ENCODE measurements at regions of chr16 and their contacts with region 1.

Region 1: DNA sequence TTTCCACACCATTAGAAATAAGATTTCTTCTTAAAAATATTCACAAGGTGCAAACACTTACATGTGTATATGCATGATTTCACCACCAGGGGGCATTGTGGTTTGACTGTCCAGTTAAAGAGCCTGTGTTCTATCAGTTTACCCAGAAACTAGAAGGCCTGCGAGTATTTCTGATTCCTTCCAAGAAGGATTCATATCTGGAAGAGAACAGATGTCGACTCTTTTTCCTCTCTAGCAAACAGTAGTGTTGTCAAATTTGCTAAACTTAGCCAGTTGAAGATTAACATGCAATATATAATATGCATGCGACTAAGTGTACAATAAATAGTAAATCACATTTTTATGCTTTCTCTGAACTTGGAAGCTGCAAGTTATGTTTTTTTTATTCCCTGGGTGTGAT is 404.1 kb downstream of the WWOX start:
- DNase-seq: peak in 1 of 3 donors; percentile 63
- ATAC-seq: peak in 2 of 4 donors; percentile 20 to 31
- H3K4me3 ChIP-seq: no peak overlapping the region
- H3K27ac ChIP-seq: no peak overlapping the region
- H3K4me1 ChIP-seq: peaks cover 0 to 18% (median 2%) of the 10 kb centered on the region in 4 donors
- H3K27me3 ChIP-seq: no peaks in the 10 kb centered on the region
- CTCF ChIP-seq: peak; percentile 82 to 87 (median 84)
- POLR2A ChIP-seq: no peak

Region 2: GRCh38 chr16:78761427-78761826 is 257.8 kb after region 1 on chr16:
- intact Hi-C with region 1: loop called (anchors 10 kb)
- DNase-seq: no peak
- ATAC-seq: no peak
- H3K4me3 ChIP-seq: no peak overlapping the region
- H3K27ac ChIP-seq: no peak overlapping the region
- H3K4me1 ChIP-seq: peaks cover 0 to 7% (median 0%) of the 10 kb centered on the region in 4 donors
- H3K27me3 ChIP-seq: no peaks in the 10 kb centered on the region
- CTCF ChIP-seq: no peak
- POLR2A ChIP-seq: no peak